CD4-positive, alpha-beta T cell (primary cell): ENCODE measurements at regions of chr2 and their contacts with region 1.

Region 1: GRCh38 chr2:134118279-134119116 is 135.4 kb upstream of the MGAT5 start:
- DNase-seq: peak; percentile 74 to 92 (median 80)
- ATAC-seq: peak; percentile 39
- H3K4me3 ChIP-seq: peak overlapping the region; percentile 76
- H3K4me3 Mint-ChIP-seq: peak overlapping the region; percentile 100
- H3K27ac ChIP-seq: no peak overlapping the region
- H3K27ac Mint-ChIP-seq: peak overlapping the region; percentile 93
- H3K4me1 ChIP-seq: peaks cover 36% of the 10 kb centered on the region
- H3K4me1 Mint-ChIP-seq: peaks cover 39% of the 10 kb centered on the region
- H3K27me3 ChIP-seq: no peaks in the 10 kb centered on the region
- H3K27me3 Mint-ChIP-seq: no peaks in the 10 kb centered on the region
- CTCF ChIP-seq: peak; percentile 77

Region 2: DNA sequence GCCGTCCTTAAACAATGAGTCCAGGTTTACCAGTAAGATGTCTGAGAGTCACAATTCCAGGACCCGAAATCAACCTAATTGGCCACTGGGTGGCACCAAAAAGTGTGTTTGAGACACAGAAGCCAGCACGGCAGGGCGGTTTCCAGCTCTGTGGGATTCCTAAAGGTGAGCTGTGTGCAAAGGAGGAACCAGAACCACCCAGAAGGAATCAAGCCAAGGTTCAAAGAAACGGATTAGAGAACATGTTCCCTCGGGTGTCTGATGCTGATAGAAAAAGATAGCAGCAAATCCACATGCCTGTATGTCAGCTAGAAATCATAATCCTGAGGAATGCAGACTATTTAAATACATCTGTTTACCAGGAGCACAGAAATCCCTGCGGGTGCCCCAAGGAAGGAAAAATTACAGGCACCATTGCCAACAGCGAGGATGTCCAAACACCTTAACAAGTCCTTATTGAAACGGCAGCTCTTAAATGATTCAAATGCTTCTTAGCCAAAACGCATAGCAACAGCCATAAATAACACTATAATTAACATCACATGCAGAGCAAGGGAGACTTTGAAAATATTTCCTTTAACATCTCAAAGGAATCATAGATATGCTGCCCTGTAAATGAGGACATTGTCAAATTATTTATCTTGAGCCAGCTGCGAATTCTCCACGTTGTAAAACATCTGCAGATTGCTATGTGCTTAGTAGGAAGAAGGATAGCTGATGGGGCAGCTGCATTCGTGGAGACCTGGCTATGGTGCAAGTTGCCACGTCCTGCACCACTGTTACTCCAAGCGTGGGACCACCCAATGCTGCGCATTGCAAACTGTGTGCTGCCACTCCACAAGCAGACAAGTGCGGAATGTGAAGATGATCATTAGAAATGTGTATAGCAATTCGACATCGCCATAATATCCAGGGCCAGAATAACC is 231.5 kb before region 1 on chr2:
- CTCF ChIA-PET with region 1: interaction called, 3 read pairs
- POLR2A ChIA-PET with region 1: no interaction called
- intact Hi-C with region 1: loop called in 1 of 2 experiments (anchors 5 kb)
- DNase-seq: peak; percentile 14 to 68 (median 36)
- ATAC-seq: no peak
- H3K4me3 ChIP-seq: no peak overlapping the region
- H3K4me3 Mint-ChIP-seq: no peak overlapping the region
- H3K27ac ChIP-seq: no peak overlapping the region
- H3K27ac Mint-ChIP-seq: no peak overlapping the region
- H3K4me1 ChIP-seq: peaks cover 4% of the 10 kb centered on the region
- H3K4me1 Mint-ChIP-seq: no peaks in the 10 kb centered on the region
- H3K27me3 ChIP-seq: no peaks in the 10 kb centered on the region
- H3K27me3 Mint-ChIP-seq: peaks cover 23% of the 10 kb centered on the region
- CTCF ChIP-seq: peak; percentile 54

Region 3: GRCh38 chr2:134098321-134098720 is 20.2 kb before region 1 on chr2:
- CTCF ChIA-PET with region 1: no interaction called
- POLR2A ChIA-PET with region 1: no interaction called
- intact Hi-C with region 1: no loop called
- DNase-seq: no peak
- ATAC-seq: no peak
- H3K4me3 ChIP-seq: no peak overlapping the region
- H3K4me3 Mint-ChIP-seq: no peak overlapping the region
- H3K27ac ChIP-seq: no peak overlapping the region
- H3K27ac Mint-ChIP-seq: no peak overlapping the region
- H3K4me1 ChIP-seq: no peaks in the 10 kb centered on the region
- H3K4me1 Mint-ChIP-seq: no peaks in the 10 kb centered on the region
- H3K27me3 ChIP-seq: no peaks in the 10 kb centered on the region
- H3K27me3 Mint-ChIP-seq: peaks cover 12% of the 10 kb centered on the region
- CTCF ChIP-seq: no peak

Region 4: GRCh38 chr2:134181210-134181609 is 62.7 kb after region 1 on chr2:
- CTCF ChIA-PET with region 1: interaction called, 7 read pairs
- POLR2A ChIA-PET with region 1: interaction called, 13 read pairs
- intact Hi-C with region 1: no loop called
- DNase-seq: peak in 13 of 14 experiments; percentile 38 to 86 (median 51)
- ATAC-seq: peak; percentile 81
- H3K4me3 ChIP-seq: no peak overlapping the region
- H3K4me3 Mint-ChIP-seq: peak overlapping the region; percentile 52
- H3K27ac ChIP-seq: peak overlapping the region in 1 of 2 donors; percentile 48
- H3K27ac Mint-ChIP-seq: peak overlapping the region; percentile 84
- H3K4me1 ChIP-seq: peaks cover 74% of the 10 kb centered on the region
- H3K4me1 Mint-ChIP-seq: peaks cover 96% of the 10 kb centered on the region
- H3K27me3 ChIP-seq: no peaks in the 10 kb centered on the region
- H3K27me3 Mint-ChIP-seq: no peaks in the 10 kb centered on the region
- CTCF ChIP-seq: peak; percentile 22

Region 5: DNA sequence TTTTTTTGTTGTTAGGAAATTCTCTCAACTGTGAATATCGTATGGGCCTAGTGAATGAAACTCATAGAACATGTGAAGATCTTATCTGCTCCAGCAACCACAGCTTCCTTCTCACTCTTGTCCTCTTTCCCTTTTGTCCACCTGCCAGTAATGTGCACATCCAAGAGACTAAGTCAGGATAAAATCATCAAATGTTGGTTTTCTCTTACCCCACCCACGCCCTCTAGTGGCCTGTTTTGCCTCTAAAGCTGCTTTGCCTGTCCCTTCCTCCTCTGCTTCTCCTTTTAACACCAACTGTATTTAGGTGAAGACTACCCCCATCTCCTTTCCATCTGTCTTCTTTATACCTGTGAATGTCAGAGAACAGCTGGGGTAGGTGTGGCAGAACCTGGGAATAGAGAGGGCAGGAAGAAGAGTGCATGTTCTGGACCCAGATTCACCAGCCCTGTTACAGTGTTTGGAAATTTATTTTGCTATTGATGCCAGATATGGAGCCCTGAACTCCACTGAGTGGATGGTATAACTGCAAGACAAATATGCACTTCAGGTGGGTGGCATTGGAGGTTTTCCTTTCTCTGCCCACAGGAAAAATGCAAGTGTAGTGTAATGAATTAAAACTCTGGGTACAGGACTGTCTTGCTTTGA is 127.0 kb after region 1 on chr2:
- CTCF ChIA-PET with region 1: interaction called, 55 read pairs
- POLR2A ChIA-PET with region 1: interaction called, 32 read pairs
- intact Hi-C with region 1: loop called (anchors 1 kb)
- DNase-seq: peak; percentile 63 to 87 (median 76)
- ATAC-seq: peak; percentile 59
- H3K4me3 ChIP-seq: no peak overlapping the region
- H3K4me3 Mint-ChIP-seq: peak overlapping the region; percentile 15
- H3K27ac ChIP-seq: no peak overlapping the region
- H3K27ac Mint-ChIP-seq: peak overlapping the region; percentile 65
- H3K4me1 ChIP-seq: peaks cover 70% of the 10 kb centered on the region
- H3K4me1 Mint-ChIP-seq: peaks cover 96% of the 10 kb centered on the region
- H3K27me3 ChIP-seq: no peaks in the 10 kb centered on the region
- H3K27me3 Mint-ChIP-seq: no peaks in the 10 kb centered on the region
- CTCF ChIP-seq: peak; percentile 86

Region 6: GRCh38 chr2:134411828-134412638 is 293.5 kb after region 1 on chr2:
- CTCF ChIA-PET with region 1: interaction called, 45 read pairs
- POLR2A ChIA-PET with region 1: interaction called, 50 read pairs
- intact Hi-C with region 1: loop called (anchors 1 kb)
- DNase-seq: peak; percentile 51 to 84 (median 62)
- ATAC-seq: peak; percentile 97
- H3K4me3 ChIP-seq: no peak overlapping the region
- H3K4me3 Mint-ChIP-seq: no peak overlapping the region
- H3K27ac ChIP-seq: no peak overlapping the region
- H3K27ac Mint-ChIP-seq: no peak overlapping the region
- H3K4me1 ChIP-seq: peaks cover 34% of the 10 kb centered on the region
- H3K4me1 Mint-ChIP-seq: peaks cover 54% of the 10 kb centered on the region
- H3K27me3 ChIP-seq: no peaks in the 10 kb centered on the region
- H3K27me3 Mint-ChIP-seq: no peaks in the 10 kb centered on the region
- CTCF ChIP-seq: peak; percentile 62

Region 7: DNA sequence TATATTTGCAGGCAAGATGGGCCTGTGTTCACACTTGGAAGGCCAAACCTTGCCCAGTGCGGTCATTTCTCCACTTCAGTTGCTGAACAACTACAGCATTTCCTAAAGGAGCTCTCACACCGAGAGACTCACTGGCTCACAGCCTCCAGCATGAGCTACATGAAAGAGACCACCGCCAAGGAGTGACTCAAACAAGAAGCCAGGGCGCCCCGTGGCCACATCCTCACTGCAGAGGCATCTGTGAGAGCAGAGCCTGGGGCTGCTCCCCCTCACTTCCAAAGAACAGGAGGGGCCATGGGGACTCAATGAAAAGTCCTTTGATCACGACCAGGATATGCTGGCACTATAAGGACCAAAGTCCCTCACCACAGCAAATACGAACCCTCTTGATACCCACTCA is 550.3 kb after region 1 on chr2:
- CTCF ChIA-PET with region 1: no interaction called
- POLR2A ChIA-PET with region 1: no interaction called
- intact Hi-C with region 1: loop called in 1 of 2 experiments (anchors 10 kb)
- DNase-seq: peak; percentile 61 to 93 (median 79)
- ATAC-seq: peak; percentile 72
- H3K4me3 ChIP-seq: no peak overlapping the region
- H3K4me3 Mint-ChIP-seq: peak overlapping the region; percentile 69
- H3K27ac ChIP-seq: peak overlapping the region in 1 of 2 donors; percentile 36
- H3K27ac Mint-ChIP-seq: peak overlapping the region; percentile 85
- H3K4me1 ChIP-seq: peaks cover 62% of the 10 kb centered on the region
- H3K4me1 Mint-ChIP-seq: peaks cover 86% of the 10 kb centered on the region
- H3K27me3 ChIP-seq: no peaks in the 10 kb centered on the region
- H3K27me3 Mint-ChIP-seq: peaks cover 4% of the 10 kb centered on the region
- CTCF ChIP-seq: no peak

Region 8: DNA sequence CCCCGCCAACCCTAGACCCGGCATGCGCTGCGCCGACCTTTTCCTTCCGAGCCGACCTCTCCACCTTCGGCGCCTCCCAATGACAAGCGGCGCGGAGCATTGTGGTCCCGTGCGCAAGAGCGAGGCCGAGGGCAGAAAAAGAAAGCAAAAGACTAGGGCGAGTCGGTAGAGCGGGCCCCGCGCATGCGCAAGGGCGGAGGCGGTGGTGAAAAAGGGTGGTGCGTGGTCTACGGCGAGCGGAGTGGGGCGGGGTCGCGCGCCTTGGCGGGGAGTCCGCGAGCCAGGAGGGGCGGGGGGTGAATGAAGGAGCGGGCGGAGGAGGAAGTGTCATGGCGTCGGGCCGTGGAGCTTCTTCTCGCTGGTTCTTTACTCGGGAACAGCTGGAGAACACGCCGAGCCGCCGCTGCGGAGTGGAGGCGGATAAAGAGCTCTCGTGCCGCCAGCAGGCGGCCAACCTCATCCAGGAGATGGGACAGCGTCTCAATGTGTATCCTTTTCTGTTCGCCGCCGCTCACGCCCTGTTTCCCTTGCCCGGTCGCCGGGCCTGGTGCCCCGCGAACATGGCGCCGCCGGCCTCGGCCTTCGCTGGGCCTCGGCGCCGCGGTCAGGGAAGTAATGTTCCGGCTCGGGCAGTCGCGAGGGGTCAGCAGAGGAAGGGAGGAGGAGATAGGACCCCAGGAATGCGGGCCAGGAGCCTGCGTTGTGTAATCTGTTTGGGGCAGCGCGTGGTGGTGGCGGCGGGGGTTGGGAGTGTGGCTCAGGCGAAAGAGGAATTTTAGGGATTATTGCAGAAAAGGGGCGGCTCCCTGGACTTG is 800.2 kb after region 1 on chr2 and contains the start of gene CCNT2:
- CTCF ChIA-PET with region 1: no interaction called
- POLR2A ChIA-PET with region 1: interaction called, 17 read pairs
- intact Hi-C with region 1: loop called in 1 of 2 experiments (anchors 5 kb)
- DNase-seq: peak; percentile 98 to 100 (median 99)
- ATAC-seq: peak; percentile 82
- H3K4me3 ChIP-seq: peak within 1 kb of the TSS; percentile 88
- H3K4me3 Mint-ChIP-seq: peak within 1 kb of the TSS; percentile 92
- H3K27ac ChIP-seq: peak within 1 kb of the TSS; percentile 95 to 96
- H3K27ac Mint-ChIP-seq: peak within 1 kb of the TSS; percentile 92
- H3K4me1 ChIP-seq: peaks cover 25% of the 10 kb centered on the region
- H3K4me1 Mint-ChIP-seq: peaks cover 57% of the 10 kb centered on the region
- H3K27me3 ChIP-seq: no peaks in the 10 kb centered on the region
- H3K27me3 Mint-ChIP-seq: no peaks in the 10 kb centered on the region
- CTCF ChIP-seq: no peak
- total RNA-seq, gene CCNT2: 62.1 to 67.5 TPM